ENCODE measurements at regions of chr16 and their contacts with region 1.

Region 1: DNA sequence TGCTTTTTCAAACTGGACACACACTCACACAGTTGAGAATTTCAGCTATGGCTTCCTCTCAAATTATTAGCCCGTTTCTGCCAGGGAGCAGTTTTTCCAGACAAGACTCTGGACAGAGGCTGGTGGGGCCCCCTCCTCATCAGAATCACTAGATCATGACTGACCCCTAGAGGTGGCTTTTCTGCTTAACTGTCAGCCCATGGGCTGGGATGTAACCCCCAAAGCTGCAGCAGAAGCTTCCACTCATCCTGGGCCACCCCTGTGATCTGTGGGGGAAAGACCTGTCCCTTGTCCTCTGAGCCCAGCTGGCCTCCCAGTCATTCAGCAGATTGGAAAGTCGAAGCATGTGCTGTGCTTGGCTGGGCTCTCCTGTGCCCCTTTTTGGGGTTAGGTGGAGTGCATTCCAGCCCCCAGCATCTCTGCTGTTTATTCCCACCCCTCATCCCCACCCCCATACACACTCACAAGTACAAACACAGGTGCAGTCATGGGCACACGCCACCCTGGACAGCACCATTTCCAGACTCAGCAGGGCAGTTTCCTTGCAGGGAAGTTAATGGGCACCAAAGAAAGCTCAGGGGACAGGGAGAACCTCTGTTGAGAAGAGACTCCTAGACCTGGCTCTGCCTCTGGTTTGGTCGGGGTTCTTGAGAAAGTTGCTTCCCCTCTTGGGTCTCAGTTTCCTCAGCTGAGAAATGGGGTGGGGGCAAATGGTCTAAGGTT is 77.6 kb upstream of the RBL2 start:
- DNase-seq: no peak
- H3K4me3 ChIP-seq: no peak overlapping the region
- CTCF ChIP-seq: no peak

Region 2: DNA sequence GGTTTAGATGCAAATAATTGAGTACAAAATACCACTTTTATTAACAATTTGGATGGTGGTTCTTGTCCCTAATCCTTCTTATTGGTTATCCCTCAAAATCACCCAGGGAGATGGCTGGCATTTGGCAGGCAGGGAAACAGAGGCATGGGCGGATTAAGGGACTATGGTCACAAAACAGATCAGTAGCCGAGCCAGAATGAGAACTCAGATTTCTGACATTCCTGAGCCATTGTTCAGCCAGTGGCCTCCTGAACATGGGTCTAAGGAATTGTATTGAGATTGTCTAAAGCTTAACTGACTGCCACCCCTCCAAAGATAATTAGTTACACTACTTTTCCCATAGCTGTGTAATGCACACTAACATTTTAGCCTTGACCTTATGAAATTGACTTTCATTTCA is 392.3 kb before region 1 on chr16:
- in situ Hi-C with region 1: no loop called
- DNase-seq: no peak
- H3K4me3 ChIP-seq: no peak overlapping the region
- CTCF ChIP-seq: no peak

Region 3: DNA sequence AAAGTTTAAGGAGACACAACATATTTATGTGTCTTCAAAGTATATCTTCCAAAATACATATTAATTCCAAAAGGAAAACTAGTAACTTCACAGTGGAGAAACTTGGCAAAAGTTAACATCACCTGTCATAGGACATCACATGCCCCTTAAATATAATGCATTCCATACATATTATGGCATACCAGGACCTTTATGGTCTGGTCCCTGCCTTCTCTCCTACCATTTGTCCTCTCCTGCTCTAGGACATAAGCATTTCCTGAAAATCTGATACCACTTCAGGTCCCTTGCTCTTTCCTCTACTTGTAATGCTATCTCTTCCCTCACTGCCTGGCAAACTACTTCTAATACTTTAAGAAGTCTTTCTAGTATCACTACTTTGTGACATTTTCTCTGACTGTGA is 90.5 kb before region 1 on chr16:
- in situ Hi-C with region 1: no loop called
- DNase-seq: no peak
- H3K4me3 ChIP-seq: no peak overlapping the region
- CTCF ChIP-seq: no peak

Region 4: GRCh38 chr16:53404959-53405358 is 48.3 kb after region 1 on chr16:
- in situ Hi-C with region 1: loop called (anchors 5 kb)
- DNase-seq: no peak
- H3K4me3 ChIP-seq: no peak overlapping the region
- CTCF ChIP-seq: no peak

Measured in astrocyte of the cerebellum (primary cell).